Sciatic nerve (tissue), 2 donors: ENCODE measurements at regions of chr15 and their contacts with region 1.

Region 1: GRCh38 chr15:64809649-64810496 is 15.6 kb downstream of the PIF1 start:
- DNase-seq: peak; percentile 93
- ATAC-seq: peak; percentile 88

Region 2: GRCh38 chr15:64739156-64739555 is 70.7 kb before region 1 on chr15:
- intact Hi-C with region 1: loop called (anchors 5 kb)
- DNase-seq: no peak
- ATAC-seq: no peak

Region 3: GRCh38 chr15:65841121-65841925 is 1031.5 kb after region 1 on chr15:
- intact Hi-C with region 1: no loop called
- DNase-seq: no peak
- ATAC-seq: peak; percentile 45